ENCODE measurements at regions of chr2 and their contacts with region 1.

Region 1: GRCh38 chr2:61176755-61177726 is 15.1 kb downstream of the C2orf74 start:
- DNase-seq: peak; percentile 88 to 95 (median 94)
- ATAC-seq: peak; percentile 88
- H3K4me3 ChIP-seq: peak overlapping the region; percentile 74 to 87
- H3K4me3 Mint-ChIP-seq: peak overlapping the region; percentile 94
- H3K27ac ChIP-seq: peak overlapping the region; percentile 80 to 95
- H3K27ac Mint-ChIP-seq: peak overlapping the region; percentile 95
- H3K4me1 ChIP-seq: peaks cover 45% of the 10 kb centered on the region
- H3K4me1 Mint-ChIP-seq: peaks cover 52% of the 10 kb centered on the region
- H3K27me3 ChIP-seq: no peaks in the 10 kb centered on the region
- H3K27me3 Mint-ChIP-seq: no peaks in the 10 kb centered on the region
- CTCF ChIP-seq: no peak

Region 2: DNA sequence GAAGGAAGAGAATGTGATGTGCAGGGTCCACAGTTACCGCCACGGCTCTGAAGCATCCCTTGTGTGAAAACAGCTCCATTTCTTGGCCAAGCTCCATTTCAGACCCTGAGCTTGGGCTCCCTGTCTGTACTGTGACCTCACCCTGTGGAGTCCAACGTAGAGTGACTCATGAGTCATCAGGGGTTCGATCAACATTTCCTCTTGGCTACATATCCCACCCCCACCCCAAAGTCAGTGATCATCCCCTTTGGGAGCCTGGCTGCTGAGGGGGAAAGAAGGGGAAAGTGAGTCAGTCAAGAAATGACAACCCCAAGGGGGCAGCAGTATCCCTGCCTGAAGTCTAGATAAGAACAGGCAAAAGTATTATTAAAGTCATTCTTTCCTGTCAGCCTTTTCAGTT is 358.8 kb before region 1 on chr2:
- CTCF ChIA-PET with region 1: no interaction called
- POLR2A ChIA-PET with region 1: no interaction called
- intact Hi-C with region 1: loop called in 1 of 2 experiments (anchors 5 kb)
- DNase-seq: peak in 5 of 9 experiments; percentile 40 to 70 (median 50)
- ATAC-seq: no peak
- H3K4me3 ChIP-seq: no peak overlapping the region
- H3K4me3 Mint-ChIP-seq: no peak overlapping the region
- H3K27ac ChIP-seq: peak overlapping the region in 1 of 2 experiments; percentile 83
- H3K27ac Mint-ChIP-seq: peak overlapping the region; percentile 78
- H3K4me1 ChIP-seq: peaks cover 32% of the 10 kb centered on the region
- H3K4me1 Mint-ChIP-seq: peaks cover 43% of the 10 kb centered on the region
- H3K27me3 ChIP-seq: no peaks in the 10 kb centered on the region
- H3K27me3 Mint-ChIP-seq: peaks cover 5% of the 10 kb centered on the region
- CTCF ChIP-seq: peak; percentile 19

Region 3: GRCh38 chr2:61144697-61145268 is 32.3 kb before region 1 on chr2:
- CTCF ChIA-PET with region 1: interaction called, 3 read pairs
- POLR2A ChIA-PET with region 1: interaction called, 30 read pairs
- intact Hi-C with region 1: loop called (anchors 1 kb)
- DNase-seq: peak; percentile 80 to 98 (median 93)
- ATAC-seq: peak; percentile 94
- H3K4me3 ChIP-seq: peak overlapping the region; percentile 77 to 94
- H3K4me3 Mint-ChIP-seq: peak overlapping the region; percentile 94
- H3K27ac ChIP-seq: peak overlapping the region; percentile 68 to 85
- H3K27ac Mint-ChIP-seq: peak overlapping the region; percentile 95
- H3K4me1 ChIP-seq: peaks cover 5% of the 10 kb centered on the region
- H3K4me1 Mint-ChIP-seq: peaks cover 15% of the 10 kb centered on the region
- H3K27me3 ChIP-seq: no peaks in the 10 kb centered on the region
- H3K27me3 Mint-ChIP-seq: no peaks in the 10 kb centered on the region
- CTCF ChIP-seq: no peak

Region 4: GRCh38 chr2:61380056-61380881 is 203.2 kb after region 1 on chr2:
- CTCF ChIA-PET with region 1: no interaction called
- POLR2A ChIA-PET with region 1: no interaction called
- intact Hi-C with region 1: no loop called
- DNase-seq: no peak
- ATAC-seq: no peak
- H3K4me3 ChIP-seq: no peak overlapping the region
- H3K4me3 Mint-ChIP-seq: no peak overlapping the region
- H3K27ac ChIP-seq: no peak overlapping the region
- H3K27ac Mint-ChIP-seq: no peak overlapping the region
- H3K4me1 ChIP-seq: no peaks in the 10 kb centered on the region
- H3K4me1 Mint-ChIP-seq: peaks cover 13% of the 10 kb centered on the region
- H3K27me3 ChIP-seq: no peaks in the 10 kb centered on the region
- H3K27me3 Mint-ChIP-seq: no peaks in the 10 kb centered on the region
- CTCF ChIP-seq: no peak

Region 5: DNA sequence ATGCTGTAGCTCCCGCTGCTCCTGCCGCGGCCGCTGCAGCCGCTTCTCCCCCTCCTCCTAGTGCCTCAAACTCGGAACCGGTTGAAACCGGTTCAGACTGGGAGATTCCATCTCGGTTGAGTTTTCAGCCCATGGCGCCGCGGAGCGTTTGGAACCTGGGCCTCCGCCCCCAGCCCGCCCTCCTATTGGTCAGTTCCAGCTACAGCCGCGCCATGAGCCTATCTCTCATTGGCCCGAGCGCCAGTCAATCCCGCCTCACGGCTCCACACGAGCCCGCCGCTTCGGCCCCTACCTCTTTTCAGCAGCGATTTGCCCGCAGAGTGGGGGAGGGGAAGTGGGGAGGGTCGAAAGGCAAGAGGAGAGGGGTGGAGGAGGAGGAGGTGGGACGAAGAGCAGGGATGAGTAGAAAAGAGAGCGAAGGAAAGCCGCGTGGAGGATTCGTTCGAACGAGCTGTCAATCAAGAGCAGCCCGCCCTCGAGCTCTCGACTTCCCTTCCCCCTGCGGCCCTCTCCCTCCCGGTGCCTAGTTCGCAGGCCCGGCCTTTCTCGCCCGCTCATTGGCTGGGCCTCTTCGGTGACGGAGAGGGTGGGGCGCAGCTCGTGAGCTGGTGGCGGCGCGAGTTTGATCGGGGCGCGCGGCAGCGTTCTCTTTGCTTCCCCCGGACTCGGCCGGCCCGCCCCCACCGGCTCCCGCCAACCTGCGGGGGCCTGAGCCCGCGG is 361.3 kb after region 1 on chr2 and contains the start of gene XPO1:
- CTCF ChIA-PET with region 1: no interaction called
- POLR2A ChIA-PET with region 1: interaction called, 17 read pairs
- intact Hi-C with region 1: loop called (anchors 2 kb)
- DNase-seq: peak; percentile 94 to 100 (median 99)
- ATAC-seq: peak; percentile 74
- H3K4me3 ChIP-seq: peak within 1 kb of the TSS; percentile 83 to 92
- H3K4me3 Mint-ChIP-seq: peak within 1 kb of the TSS; percentile 92
- H3K27ac ChIP-seq: peak within 1 kb of the TSS; percentile 100
- H3K27ac Mint-ChIP-seq: peak within 1 kb of the TSS; percentile 99
- H3K4me1 ChIP-seq: peaks cover 23% of the 10 kb centered on the region
- H3K4me1 Mint-ChIP-seq: peaks cover 38% of the 10 kb centered on the region
- H3K27me3 ChIP-seq: no peaks in the 10 kb centered on the region
- H3K27me3 Mint-ChIP-seq: no peaks in the 10 kb centered on the region
- CTCF ChIP-seq: no peak
- total RNA-seq, gene XPO1: 96.6 TPM

Region 6: DNA sequence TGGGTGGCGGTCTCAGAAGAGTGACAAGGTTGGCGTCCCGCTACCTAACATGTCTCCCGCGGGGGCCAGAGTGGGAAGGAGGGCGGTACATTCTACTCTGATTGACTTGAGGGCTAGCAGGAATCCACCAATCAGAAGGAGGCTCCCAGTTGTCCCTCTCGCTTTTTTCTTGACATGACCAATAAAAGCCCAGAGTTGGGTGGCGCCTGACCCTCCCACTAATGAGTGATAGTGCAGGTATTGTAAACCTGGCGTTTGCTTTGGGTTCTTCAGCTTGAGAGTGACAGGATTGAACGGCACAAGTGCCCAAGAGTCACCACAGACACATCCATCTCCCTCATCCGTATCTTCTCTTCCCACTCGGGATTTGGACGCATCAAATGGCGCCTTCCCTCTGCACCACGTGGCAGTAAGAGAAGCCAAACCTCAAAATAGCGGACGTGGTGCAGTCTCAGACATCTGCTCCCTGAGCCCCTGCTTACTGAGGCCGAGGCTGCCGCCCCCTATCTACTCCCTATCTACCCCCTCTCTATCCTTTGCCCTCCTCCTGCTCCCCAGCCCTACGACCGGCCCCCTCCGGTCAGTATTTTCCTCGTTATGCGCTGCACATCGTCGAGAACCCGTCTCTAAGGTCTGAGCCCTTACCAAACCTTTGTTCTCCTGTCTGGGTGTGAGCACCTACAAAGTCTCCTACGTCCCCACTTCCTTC is 677.6 kb after region 1 on chr2:
- CTCF ChIA-PET with region 1: no interaction called
- POLR2A ChIA-PET with region 1: no interaction called
- intact Hi-C with region 1: loop called (anchors 10 kb)
- DNase-seq: peak; percentile 80 to 98 (median 87)
- ATAC-seq: peak; percentile 89
- H3K4me3 ChIP-seq: peak overlapping the region; percentile 79 to 88
- H3K4me3 Mint-ChIP-seq: peak overlapping the region; percentile 97
- H3K27ac ChIP-seq: peak overlapping the region; percentile 64 to 81
- H3K27ac Mint-ChIP-seq: peak overlapping the region; percentile 96
- H3K4me1 ChIP-seq: peaks cover 12% of the 10 kb centered on the region
- H3K4me1 Mint-ChIP-seq: peaks cover 15% of the 10 kb centered on the region
- H3K27me3 ChIP-seq: no peaks in the 10 kb centered on the region
- H3K27me3 Mint-ChIP-seq: no peaks in the 10 kb centered on the region
- CTCF ChIP-seq: no peak